ENCODE measurements at regions of chr2 and their contacts with region 1.

Region 1: DNA sequence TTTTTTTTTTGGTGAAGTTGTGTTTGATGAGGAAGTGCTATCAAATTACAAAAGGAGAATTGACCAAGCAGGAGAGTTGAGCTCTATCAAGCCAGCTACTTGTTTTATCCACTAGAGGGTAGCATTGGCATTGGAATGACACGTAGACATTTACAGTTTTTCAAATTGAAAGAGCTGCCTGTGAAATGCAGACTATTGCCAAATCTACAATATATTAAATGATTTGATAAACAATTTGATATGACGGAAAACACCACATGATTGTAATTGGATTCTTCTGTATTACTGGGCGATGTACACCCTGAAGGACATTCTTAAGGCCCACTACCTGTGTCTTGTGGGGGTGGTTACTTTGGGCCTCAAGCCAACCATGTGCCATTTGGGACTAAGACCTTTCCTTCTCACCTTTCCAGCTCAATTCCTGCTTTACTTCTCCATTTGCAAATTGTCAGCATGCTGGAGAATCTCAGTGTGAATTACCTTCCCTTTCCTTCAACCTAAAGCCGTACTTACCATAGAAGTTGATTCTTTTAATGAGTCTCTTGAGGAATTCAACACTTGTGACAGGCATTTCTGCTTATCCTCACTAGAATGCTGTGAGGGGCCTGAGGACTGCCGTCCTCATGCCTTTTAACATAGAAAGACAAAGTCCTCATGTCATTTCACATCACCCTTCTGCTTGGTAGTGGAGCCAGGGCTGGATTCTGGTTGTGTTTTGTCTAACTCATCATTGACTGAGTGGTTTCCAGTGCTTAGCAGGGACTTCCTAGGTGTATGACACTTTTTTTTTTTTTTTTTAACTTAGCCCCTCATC is 134.8 kb upstream of the THUMPD2 start:
- DNase-seq: no peak
- H3K4me3 ChIP-seq: no peak overlapping the region
- H3K27ac ChIP-seq: no peak overlapping the region
- H3K4me1 ChIP-seq: no peaks in the 10 kb centered on the region
- H3K27me3 ChIP-seq: no peaks in the 10 kb centered on the region
- CTCF ChIP-seq: peak; percentile 36 to 64 (median 56)
- EP300 ChIP-seq: no peak
- POLR2A ChIP-seq: no peak

Region 2: GRCh38 chr2:39871291-39871761 is 42.5 kb before region 1 on chr2:
- intact Hi-C with region 1: no loop called
- DNase-seq: no peak
- H3K4me3 ChIP-seq: no peak overlapping the region
- H3K27ac ChIP-seq: no peak overlapping the region
- H3K4me1 ChIP-seq: peaks cover 3% of the 10 kb centered on the region
- H3K27me3 ChIP-seq: no peaks in the 10 kb centered on the region
- CTCF ChIP-seq: no peak
- EP300 ChIP-seq: no peak
- POLR2A ChIP-seq: no peak

Region 3: DNA sequence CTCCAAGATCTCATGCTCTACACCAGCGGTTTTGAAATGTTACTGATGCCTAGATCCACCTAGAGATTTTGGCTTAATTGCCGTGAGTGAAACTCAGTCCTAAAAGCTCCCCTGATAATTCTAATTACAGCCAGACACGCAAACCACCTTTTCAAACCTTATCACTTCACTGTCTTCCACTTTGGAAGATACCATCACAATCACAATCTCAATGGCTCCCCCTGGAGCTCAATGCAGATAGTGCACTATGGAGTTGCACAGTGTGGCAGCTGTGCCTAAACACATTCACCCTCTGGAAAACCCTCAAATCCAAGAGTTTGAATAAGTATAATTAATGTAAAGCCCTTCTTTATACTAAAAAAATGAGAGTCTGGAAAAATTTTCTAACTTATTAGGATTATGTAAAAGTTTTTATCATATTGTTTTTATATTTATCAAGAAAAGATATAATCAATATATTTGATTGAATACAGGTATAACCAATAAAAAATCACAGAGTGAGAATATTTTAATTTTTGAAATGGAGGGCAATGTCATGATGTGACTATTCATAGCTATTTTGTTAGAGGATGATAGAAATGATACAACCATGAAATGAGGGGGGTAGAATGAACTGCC is 640.9 kb after region 1 on chr2:
- intact Hi-C with region 1: loop called in 1 of 4 experiments (anchors 10 kb)
- DNase-seq: peak; percentile 15 to 62 (median 38)
- H3K4me3 ChIP-seq: no peak overlapping the region
- H3K27ac ChIP-seq: no peak overlapping the region
- H3K4me1 ChIP-seq: no peaks in the 10 kb centered on the region
- H3K27me3 ChIP-seq: no peaks in the 10 kb centered on the region
- CTCF ChIP-seq: peak in 2 of 3 donors; percentile 50 to 54
- EP300 ChIP-seq: no peak
- POLR2A ChIP-seq: no peak

Region 4: GRCh38 chr2:41698678-41699422 is 1785.0 kb after region 1 on chr2:
- intact Hi-C with region 1: loop called in 1 of 4 experiments (anchors 10 kb)
- DNase-seq: peak; percentile 28 to 75 (median 55)
- H3K4me3 ChIP-seq: no peak overlapping the region
- H3K27ac ChIP-seq: no peak overlapping the region
- H3K4me1 ChIP-seq: peaks cover 2% of the 10 kb centered on the region
- H3K27me3 ChIP-seq: no peaks in the 10 kb centered on the region
- CTCF ChIP-seq: peak; percentile 36 to 60 (median 53)
- EP300 ChIP-seq: no peak
- POLR2A ChIP-seq: no peak

Region 5: DNA sequence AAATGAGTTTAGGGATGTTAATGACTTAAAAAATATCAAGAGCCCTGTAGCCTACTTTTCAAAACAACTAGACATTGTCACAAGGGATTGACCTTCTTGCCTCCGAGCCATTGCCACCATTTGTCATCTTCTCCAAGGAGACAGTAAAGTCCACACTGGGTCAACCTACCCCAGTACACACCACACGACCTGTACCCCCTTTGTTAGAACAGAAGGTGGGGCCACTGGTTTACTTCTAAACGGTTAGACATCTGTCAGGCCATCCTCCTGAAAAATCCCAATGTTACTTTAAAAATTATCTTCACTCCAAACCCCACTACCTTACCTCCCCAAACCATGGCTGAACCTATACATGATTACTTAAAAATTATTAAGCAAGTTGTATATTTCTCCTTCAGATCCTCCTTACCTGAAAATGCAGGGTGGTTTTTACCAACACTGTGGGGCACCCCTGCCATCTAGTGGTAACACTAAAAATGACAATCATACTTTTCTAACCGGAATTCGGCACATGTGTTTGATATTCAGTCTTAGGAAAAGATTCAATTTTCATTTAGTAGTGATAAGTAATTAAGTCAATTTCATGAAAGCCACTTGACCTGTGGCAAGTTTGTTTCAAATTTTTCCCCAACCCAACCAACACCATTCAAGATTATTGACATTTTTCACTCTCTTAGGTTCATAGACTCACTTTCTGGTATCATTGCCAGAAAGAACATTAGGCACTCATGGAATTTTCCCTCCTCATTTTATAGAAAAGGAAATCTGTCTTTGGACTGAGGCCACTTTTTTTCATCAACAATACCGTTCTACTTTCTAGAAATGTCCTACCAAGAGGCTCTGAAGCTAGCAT is 1868.7 kb after region 1 on chr2:
- intact Hi-C with region 1: loop called in 2 of 4 experiments (anchors 10 kb)
- DNase-seq: peak in 2 of 5 donors; percentile 26 to 28
- H3K4me3 ChIP-seq: no peak overlapping the region
- H3K27ac ChIP-seq: no peak overlapping the region
- H3K4me1 ChIP-seq: peaks cover 1% of the 10 kb centered on the region
- H3K27me3 ChIP-seq: no peaks in the 10 kb centered on the region
- CTCF ChIP-seq: peak; percentile 35 to 84 (median 83)
- EP300 ChIP-seq: no peak
- POLR2A ChIP-seq: no peak